ENCODE measurements at regions of chr19 and their contacts with region 1.

Region 1: DNA sequence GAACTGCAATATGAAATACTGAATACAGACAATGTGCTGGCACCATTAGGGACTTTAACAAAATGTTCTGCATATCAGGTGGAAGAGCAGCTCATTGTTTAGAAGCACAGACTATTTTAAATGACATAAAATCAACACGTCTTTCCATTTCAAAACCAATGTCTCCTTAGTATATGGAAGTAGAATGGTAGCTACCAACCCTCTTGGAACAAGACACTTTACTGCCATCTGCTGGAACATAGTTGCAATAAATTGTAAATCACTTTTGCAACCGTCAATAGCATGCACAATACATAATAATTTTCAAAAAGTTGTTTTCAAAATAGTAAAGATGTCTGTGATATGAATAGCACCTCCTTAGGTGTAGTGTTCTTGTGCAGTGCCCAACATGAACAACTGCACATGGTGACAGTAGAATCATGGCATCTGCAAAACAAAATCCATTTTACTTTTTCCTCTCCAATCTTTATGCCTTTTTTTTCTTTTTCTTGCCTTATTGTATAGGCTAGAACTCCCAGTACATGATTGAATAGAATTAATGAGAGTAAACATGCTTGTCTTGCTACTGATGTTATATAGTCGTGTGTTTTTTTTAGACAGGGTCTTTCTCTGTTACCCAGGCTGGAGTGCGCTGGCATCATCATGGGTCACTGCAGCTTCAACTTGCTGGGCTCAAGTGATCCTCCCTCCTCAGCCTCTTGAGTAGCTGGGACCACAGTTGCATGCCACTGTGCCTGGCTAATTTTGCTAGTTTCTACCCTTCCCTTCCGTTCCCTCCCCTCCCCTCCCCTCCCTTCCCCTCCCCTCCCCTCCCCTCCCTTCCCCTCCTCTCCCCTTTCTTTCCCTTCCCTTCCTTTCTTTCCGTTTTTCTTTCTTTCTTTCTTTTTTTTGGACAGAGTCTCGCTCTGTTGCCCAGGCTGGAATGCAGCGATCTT is 7.8 kb upstream of the LYPD5 start:
- DNase-seq: peak; percentile 32
- H3K4me3 ChIP-seq: no peak overlapping the region
- H3K27ac ChIP-seq: no peak overlapping the region
- H3K27me3 ChIP-seq: peaks cover 4% of the 10 kb centered on the region
- CTCF ChIP-seq: peak; percentile 64

Region 2: DNA sequence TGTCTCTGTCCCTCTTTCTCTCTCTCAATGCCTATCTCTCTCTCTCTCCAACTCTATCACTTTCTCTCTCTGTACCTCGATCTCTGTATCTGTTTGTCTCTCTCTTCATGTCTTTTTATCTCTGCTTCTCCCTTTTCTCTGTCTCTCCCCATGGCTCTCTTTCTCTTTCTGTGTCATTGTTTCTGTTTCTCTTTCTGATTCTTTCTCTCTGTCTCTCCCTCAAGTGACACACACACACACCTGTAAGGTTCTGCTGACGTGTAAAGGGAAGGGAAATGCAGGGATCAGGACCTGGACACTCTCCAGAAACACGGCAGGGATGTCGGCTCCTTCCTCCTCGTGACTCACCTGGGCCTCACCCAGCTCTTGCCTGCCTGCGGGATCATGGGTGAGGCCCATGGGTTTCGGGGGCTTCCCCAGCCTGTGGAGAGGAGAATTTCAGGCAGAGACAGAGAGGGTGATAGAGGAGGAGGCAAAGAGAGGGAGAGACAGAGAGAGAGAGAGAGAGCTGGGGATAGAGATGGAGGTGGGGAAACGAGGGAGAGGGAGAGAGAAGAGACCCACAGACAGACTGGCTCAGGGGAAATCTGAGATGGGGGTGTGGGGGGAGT is 134.7 kb before region 1 on chr19:
- CTCF ChIA-PET with region 1: interaction called, 14 read pairs
- POLR2A ChIA-PET with region 1: no interaction called
- DNase-seq: no peak
- H3K4me3 ChIP-seq: no peak overlapping the region
- H3K27ac ChIP-seq: no peak overlapping the region
- H3K27me3 ChIP-seq: no peaks in the 10 kb centered on the region
- CTCF ChIP-seq: no peak

Region 3: DNA sequence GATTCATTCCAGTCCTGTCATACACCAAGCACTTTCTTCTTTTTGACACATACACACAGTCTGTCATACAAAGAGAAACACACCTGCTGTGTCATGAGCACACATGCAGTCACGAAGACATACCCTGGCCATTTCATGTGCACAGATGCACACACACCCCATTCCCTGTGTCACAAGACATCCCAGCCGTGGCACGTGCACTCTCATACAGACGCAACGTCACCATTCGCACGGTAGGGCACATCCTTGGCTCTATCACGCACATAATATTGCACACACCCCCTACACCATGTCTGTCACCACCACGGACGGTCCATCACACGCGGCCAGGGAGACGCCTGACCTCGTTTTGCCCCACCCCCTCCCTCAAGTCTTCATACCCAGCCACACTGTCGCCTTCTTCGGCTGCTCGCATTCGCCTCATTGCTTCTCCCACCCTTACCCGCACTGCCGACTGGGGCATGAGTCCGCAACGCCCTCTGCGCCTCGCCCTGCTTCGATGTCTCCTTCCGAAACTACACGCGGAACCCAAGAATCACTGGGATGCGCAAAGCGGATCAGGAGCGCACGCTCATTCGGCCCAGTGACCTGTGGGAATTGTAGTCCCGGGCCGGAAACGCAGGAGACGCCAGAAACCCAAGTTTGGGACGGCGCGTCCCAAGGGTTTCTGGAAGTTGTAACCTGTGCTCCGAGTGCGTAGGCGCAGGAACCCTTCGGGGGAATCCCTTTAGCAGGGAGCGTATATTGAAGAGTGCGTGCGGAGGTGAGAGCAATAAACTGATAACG is 10.3 kb after region 1 on chr19:
- CTCF ChIA-PET with region 1: interaction called, 16 read pairs
- POLR2A ChIA-PET with region 1: no interaction called
- DNase-seq: peak; percentile 7
- H3K4me3 ChIP-seq: peak overlapping the region; percentile 70
- H3K27ac ChIP-seq: no peak overlapping the region
- H3K27me3 ChIP-seq: peaks cover 4% of the 10 kb centered on the region
- CTCF ChIP-seq: no peak

Region 4: DNA sequence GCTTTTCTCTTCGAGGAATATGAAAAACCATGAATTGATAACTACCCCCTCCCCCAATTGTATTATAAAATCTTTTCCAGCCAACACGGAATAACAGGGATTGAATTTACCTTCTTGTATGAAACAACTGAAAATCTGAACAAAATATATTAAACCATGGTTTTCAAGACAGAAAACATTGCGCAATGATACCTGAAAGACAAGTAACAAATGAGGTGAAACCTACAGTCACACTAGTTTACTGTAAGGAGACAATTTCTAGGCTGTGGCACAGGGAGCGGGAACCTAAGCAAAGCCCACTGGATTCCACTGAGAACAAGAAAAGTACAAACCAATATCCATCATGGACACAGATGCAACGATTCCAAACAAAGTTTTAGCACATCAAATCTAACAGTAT is 70.5 kb after region 1 on chr19:
- CTCF ChIA-PET with region 1: no interaction called
- POLR2A ChIA-PET with region 1: no interaction called
- DNase-seq: no peak
- H3K4me3 ChIP-seq: no peak overlapping the region
- H3K27ac ChIP-seq: no peak overlapping the region
- H3K27me3 ChIP-seq: no peaks in the 10 kb centered on the region
- CTCF ChIP-seq: no peak

Measured in AG04450 (cell line).